SK-N-SH (cell line): ENCODE measurements at regions of chr10 and their contacts with region 1.

Region 1: DNA sequence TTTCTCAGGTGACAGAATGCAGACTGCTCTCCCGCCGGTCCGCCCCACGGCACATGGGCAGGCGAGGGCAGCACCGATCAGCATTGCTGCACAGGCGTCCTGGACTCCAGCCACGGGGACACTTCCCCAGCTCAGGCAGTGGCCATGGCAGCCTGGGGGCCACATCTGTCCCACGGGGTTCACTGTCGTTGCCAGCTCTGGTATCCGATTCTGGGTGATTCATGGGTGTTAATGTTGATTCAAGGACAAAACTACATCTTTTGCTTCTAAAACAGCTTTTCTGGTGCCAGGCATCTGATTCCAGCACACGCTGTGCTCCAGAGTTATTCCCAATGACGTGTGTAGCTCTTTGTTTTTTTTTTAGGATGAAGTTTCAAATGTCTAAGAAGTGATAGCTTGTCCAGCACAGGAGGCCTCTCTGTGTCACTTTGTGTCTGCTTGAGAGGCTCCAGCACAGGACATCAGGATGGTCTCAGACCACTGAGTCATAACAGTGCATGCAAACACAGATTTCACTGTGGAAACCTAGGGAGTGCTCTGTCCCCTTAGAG is 218.0 kb downstream of the WDR37 start:
- DNase-seq: no peak
- H3K4me3 ChIP-seq: no peak overlapping the region
- H3K27ac ChIP-seq: peak overlapping the region in 1 of 2 experiments; percentile 99; a peak in 2 of 4 replicates
- H3K4me1 ChIP-seq: peaks cover 0 to 58% of the 10 kb centered on the region in 2 experiments; a peak in 2 of 4 replicates
- H3K27me3 ChIP-seq: no peaks in the 10 kb centered on the region
- CTCF ChIP-seq: no peak
- EP300 ChIP-seq: peak in 1 of 2 experiments; percentile 42; a peak in 1 of 4 replicates
- RAD21 ChIP-seq: 0 out of 2 replicates have a peak, but pooled peaks have one; percentile 7

Region 2: DNA sequence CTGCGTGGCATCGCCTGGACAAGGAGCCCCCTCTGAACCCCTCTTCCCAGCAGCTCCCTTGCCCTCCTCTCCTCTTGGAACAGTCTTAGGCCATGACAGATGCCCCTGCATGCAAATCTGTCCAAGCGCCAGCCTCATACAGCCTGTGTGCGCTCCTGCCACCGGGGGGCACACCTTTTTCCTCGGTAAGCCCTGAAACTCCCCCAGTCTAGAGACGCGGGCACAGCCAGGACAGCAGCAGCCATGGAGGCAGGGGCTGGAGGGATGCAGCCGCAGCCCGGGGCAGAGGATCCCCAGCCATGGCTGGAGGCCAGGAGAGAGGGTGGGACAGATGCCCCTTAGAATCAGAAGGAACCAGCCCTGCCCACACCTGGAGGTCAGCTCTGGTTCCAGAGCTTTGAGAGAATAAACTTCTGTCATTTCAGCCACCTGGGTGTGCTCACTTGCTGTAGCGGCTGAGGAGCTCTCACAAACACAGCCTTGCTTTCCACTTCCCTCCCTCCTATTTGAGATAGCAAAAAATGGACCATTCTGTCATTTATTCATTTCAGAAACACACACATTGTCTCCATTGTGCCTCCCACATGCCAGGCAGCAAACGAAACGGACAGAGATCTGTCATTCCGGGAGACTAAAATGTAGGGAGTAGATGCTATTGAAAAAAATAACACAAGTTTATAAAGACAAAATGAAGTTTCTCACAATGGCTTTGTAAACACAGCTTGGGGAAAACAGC is 23.5 kb after region 1 on chr10:
- CTCF ChIA-PET with region 1: interaction called, 10 read pairs
- POLR2A ChIA-PET with region 1: interaction called, 28 read pairs
- DNase-seq: peak; percentile 59
- H3K4me3 ChIP-seq: no peak overlapping the region
- H3K27ac ChIP-seq: peak overlapping the region in 1 of 2 experiments; percentile 100; a peak in 2 of 4 replicates
- H3K4me1 ChIP-seq: peaks cover 0 to 51% of the 10 kb centered on the region in 2 experiments; a peak in 2 of 4 replicates
- H3K27me3 ChIP-seq: no peaks in the 10 kb centered on the region
- CTCF ChIP-seq: no peak
- EP300 ChIP-seq: no peak
- RAD21 ChIP-seq: peak; percentile 44